PC-3 (cell line): ENCODE measurements at regions of chr6 and their contacts with region 1.

Region 1: DNA sequence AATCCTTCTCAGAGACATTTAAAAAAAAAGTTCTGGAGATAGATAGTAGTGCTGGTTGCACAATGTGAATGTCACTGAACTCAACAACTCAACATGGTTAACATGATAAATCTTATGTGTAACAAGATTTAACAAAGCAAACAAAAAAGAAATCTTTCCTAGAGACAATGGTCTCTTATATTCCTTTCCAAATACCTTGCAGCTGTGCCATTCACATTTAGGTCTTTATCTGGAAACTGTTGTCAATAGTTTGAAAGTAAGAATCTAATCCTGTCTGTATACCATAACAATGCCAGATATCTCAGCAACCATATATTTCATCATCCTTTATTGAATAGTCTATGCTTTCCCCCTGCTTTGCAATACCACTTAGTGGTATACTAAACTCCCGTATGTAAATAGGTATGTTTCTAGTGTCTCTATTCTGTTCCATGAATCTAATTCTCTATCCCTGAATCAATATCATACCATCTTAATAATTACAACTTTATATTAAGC is 2.1 kb downstream of the SERAC1 start:
- DNase-seq: no peak
- ATAC-seq: no peak
- H3K4me3 ChIP-seq: no peak overlapping the region
- H3K27ac ChIP-seq: no peak overlapping the region
- H3K4me1 ChIP-seq: peaks cover 16% of the 10 kb centered on the region
- H3K27me3 ChIP-seq: no peaks in the 10 kb centered on the region
- CTCF ChIP-seq: no peak

Region 2: GRCh38 chr6:158149641-158150040 is 16.3 kb before region 1 on chr6:
- CTCF ChIA-PET with region 1: no interaction called
- POLR2A ChIA-PET with region 1: no interaction called
- intact Hi-C with region 1: loop called (anchors 2 kb)
- DNase-seq: peak; percentile 63
- ATAC-seq: peak; percentile 67
- H3K4me3 ChIP-seq: no peak overlapping the region
- H3K27ac ChIP-seq: peak overlapping the region; percentile 52
- H3K4me1 ChIP-seq: peaks cover 28% of the 10 kb centered on the region
- H3K27me3 ChIP-seq: no peaks in the 10 kb centered on the region
- CTCF ChIP-seq: no peak